IMR-90 (cell line): ENCODE measurements at regions of chrX and their contacts with region 1.

Region 1: GRCh38 chrX:13750204-13750603 is 15.7 kb downstream of the OFD1 start:
- DNase-seq: peak; percentile 48
- ATAC-seq: peak; percentile 49
- H3K4me3 ChIP-seq: no peak overlapping the region
- H3K27ac ChIP-seq: no peak overlapping the region
- H3K4me1 ChIP-seq: peaks cover 2% of the 10 kb centered on the region
- H3K27me3 ChIP-seq: no peaks in the 10 kb centered on the region
- CTCF ChIP-seq: peak; percentile 57
- POLR2A ChIP-seq: no peak
- RAD21 ChIP-seq: peak; percentile 51

Region 2: DNA sequence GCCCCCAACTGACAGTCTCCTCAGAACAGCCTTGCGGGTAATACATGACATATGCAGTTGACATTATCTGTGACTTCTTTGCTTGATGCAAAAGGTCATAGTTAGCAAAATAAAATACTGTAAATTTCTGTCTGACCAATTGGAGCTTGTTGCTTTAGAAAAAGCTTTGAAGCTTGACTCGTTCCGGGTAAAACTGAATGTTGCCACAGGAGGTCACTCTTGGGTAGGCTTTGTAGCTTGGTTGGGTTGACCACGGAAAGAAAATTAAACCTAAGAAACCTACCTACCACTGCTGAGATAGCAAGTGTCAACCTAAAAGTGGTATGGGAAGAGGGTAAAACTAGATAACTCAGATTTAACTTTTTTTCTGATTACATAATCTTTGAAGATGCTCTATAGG is 935.8 kb before region 1 on chrX:
- CTCF ChIA-PET with region 1: no interaction called
- POLR2A ChIA-PET with region 1: no interaction called
- dilution Hi-C with region 1: no loop called
- in situ Hi-C with region 1: no loop called
- intact Hi-C with region 1: loop called (anchors 10 kb)
- DNase-seq: peak; percentile 62
- ATAC-seq: peak; percentile 87
- H3K4me3 ChIP-seq: no peak overlapping the region
- H3K27ac ChIP-seq: no peak overlapping the region
- H3K4me1 ChIP-seq: no peaks in the 10 kb centered on the region
- H3K27me3 ChIP-seq: no peaks in the 10 kb centered on the region
- CTCF ChIP-seq: peak; percentile 60
- POLR2A ChIP-seq: no peak
- RAD21 ChIP-seq: peak; percentile 71

Region 3: GRCh38 chrX:13506574-13506973 is 243.6 kb before region 1 on chrX:
- CTCF ChIA-PET with region 1: interaction called, 4 read pairs
- POLR2A ChIA-PET with region 1: no interaction called
- dilution Hi-C with region 1: no loop called
- in situ Hi-C with region 1: loop called (anchors 10 kb)
- intact Hi-C with region 1: loop called (anchors 1 kb)
- DNase-seq: peak; percentile 61
- ATAC-seq: 0 out of 2 replicates have a peak, but pooled peaks have one; percentile 48
- H3K4me3 ChIP-seq: no peak overlapping the region
- H3K27ac ChIP-seq: no peak overlapping the region
- H3K4me1 ChIP-seq: no peaks in the 10 kb centered on the region
- H3K27me3 ChIP-seq: peaks cover 9% of the 10 kb centered on the region
- CTCF ChIP-seq: peak; percentile 94
- POLR2A ChIP-seq: no peak
- RAD21 ChIP-seq: peak; percentile 95

Region 4: GRCh38 chrX:13515211-13515930 is 234.8 kb before region 1 on chrX:
- CTCF ChIA-PET with region 1: no interaction called
- POLR2A ChIA-PET with region 1: no interaction called
- dilution Hi-C with region 1: no loop called
- in situ Hi-C with region 1: loop called (anchors 10 kb)
- intact Hi-C with region 1: no loop called
- DNase-seq: no peak
- ATAC-seq: no peak
- H3K4me3 ChIP-seq: no peak overlapping the region
- H3K27ac ChIP-seq: no peak overlapping the region
- H3K4me1 ChIP-seq: no peaks in the 10 kb centered on the region
- H3K27me3 ChIP-seq: peaks cover 5% of the 10 kb centered on the region; the same call in 1 of the 2 replicates
- CTCF ChIP-seq: no peak
- POLR2A ChIP-seq: no peak
- RAD21 ChIP-seq: no peak

Region 5: GRCh38 chrX:13658602-13659001 is 91.6 kb before region 1 on chrX:
- CTCF ChIA-PET with region 1: no interaction called
- POLR2A ChIA-PET with region 1: no interaction called
- dilution Hi-C with region 1: no loop called
- in situ Hi-C with region 1: loop called (anchors 5 kb)
- intact Hi-C with region 1: loop called (anchors 1 kb)
- DNase-seq: peak; percentile 73
- ATAC-seq: peak; percentile 71
- H3K4me3 ChIP-seq: no peak overlapping the region
- H3K27ac ChIP-seq: no peak overlapping the region
- H3K4me1 ChIP-seq: peaks cover 5% of the 10 kb centered on the region; the same call in 1 of the 2 replicates
- H3K27me3 ChIP-seq: peaks cover 2% of the 10 kb centered on the region
- CTCF ChIP-seq: peak; percentile 80
- POLR2A ChIP-seq: no peak
- RAD21 ChIP-seq: peak; percentile 73